ENCODE measurements at regions of chr1 and their contacts with region 1.

Region 1: DNA sequence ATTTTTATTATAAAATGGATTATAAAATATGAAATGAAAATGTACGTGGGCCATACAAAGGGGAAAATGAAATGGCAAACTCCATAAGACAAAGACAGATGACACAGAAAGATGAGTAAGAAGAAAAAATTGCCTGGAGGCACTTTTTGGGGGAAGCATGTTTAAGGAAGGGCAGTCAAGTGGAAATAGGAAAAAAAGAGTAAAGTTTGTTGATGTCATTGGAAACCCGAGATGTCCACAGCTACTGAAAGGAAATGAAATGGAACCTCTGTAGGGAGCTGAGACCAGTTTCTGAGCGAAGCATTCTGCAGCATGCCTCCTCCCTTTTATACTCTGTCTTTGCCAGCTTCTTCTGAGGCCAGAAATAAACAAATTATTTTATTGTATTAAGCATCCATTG is 203.4 kb upstream of the UBE2U start:
- DNase-seq: peak; percentile 59
- H3K4me3 ChIP-seq: no peak overlapping the region
- CTCF ChIP-seq: no peak

Region 2: GRCh38 chr1:64038965-64039926 is 39.2 kb after region 1 on chr1:
- in situ Hi-C with region 1: loop called (anchors 5 kb)
- DNase-seq: peak; percentile 98
- H3K4me3 ChIP-seq: no peak overlapping the region
- CTCF ChIP-seq: no peak